CD4-positive, alpha-beta T cell (primary cell): ENCODE measurements at regions of chr1 and their contacts with region 1.

Region 1: DNA sequence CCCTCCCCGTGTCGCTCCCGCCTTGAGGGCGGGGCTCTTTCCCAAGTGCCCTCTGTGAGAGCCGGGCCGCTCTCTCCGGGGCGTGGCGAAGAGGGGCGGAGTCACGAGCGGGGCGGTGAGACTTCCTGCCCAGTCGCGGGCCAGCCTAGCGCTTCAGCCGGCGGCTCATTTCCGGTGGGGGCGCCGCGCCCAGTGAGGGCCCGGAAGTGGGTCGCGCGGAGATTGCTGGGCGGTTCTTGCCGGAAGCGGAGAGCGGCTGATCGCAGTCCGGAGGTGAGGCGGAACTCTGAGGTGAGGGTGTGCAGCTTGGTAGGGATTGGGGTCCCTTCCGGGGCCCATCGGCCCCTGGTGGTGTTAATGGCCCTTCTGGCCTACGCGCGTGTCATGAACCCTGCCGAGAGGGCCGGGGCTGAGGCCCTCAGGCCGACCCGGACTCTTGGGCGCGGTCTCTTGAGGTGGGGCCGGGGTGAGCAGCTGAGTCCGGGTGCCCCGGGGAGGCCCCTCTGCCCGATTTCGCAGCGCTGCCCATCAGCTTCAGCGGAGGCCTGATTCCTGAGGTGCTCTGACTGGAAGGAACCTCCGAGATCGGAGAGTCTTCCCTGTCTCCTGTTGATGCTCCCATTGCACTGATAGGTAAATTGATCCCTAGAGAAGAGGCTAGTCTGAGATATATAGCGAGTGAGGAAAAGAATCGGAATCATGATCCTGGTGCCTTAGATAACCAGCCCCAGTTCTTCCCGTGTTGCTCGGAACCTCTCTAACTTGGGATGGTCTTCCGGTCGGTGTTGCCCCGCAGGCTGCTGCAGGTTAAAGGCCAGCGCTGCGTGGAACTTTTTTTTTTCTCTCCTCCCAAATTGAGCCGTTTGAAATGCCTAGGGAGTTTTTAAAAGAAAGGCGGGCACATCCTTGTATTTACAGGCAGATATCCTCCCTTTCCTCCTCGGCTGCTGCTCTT is at the start of gene CAP1:
- DNase-seq: peak; percentile 99 to 100 (median 100)
- ATAC-seq: peak; percentile 88
- H3K4me3 ChIP-seq: peak within 1 kb of the TSS; percentile 100
- H3K4me3 Mint-ChIP-seq: peak within 1 kb of the TSS; percentile 98
- H3K27ac ChIP-seq: peak within 1 kb of the TSS; percentile 88 to 93
- H3K27ac Mint-ChIP-seq: peak within 1 kb of the TSS; percentile 95
- H3K4me1 ChIP-seq: peaks cover 77% of the 10 kb centered on the region
- H3K4me1 Mint-ChIP-seq: peaks cover 83% of the 10 kb centered on the region
- H3K27me3 ChIP-seq: no peaks in the 10 kb centered on the region
- H3K27me3 Mint-ChIP-seq: no peaks in the 10 kb centered on the region
- CTCF ChIP-seq: no peak
- total RNA-seq, gene CAP1: 121 to 126 TPM

Region 2: DNA sequence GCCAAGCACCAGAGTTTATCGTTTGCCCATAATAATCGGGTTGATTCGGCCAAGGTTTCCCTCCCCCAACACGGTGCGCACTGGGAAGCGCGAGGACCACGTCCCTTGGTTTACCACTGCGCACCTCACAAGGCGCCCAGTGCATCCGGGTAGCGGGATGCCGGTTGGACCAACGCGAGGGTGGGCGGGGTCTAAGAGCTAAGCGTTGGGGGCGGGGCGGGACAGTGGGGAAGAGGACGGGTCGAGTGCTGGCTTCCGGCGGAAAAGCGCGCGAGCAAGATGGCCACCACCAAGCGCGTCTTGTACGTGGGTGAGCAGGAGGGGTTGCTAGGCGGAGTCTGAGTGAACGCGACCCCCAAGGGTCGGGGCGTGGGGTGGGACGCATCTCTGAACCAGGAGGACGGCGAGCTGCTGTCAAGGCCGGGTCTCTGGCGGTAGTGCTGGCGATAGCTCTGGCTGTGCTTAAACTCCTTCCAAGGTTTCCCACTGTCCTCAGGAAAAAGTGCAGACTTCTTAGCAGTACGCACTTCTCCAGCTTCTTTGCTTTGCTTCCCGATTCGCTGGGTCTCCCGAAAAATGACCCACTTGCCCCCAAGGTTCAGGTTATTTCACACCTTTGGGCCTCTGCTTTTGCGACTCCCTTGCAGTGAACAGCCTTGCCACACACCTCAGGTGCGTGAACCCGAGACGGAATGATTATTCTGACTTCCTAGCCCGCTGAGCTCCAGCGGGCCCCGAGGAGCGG is 302.0 kb before region 1 on chr1 and contains the start of gene PPIE:
- CTCF ChIA-PET with region 1: no interaction called
- POLR2A ChIA-PET with region 1: interaction called, 3 read pairs
- intact Hi-C with region 1: loop called in 1 of 2 experiments (anchors 5 kb)
- DNase-seq: peak; percentile 89 to 97 (median 95)
- ATAC-seq: peak; percentile 98
- H3K4me3 ChIP-seq: peak within 1 kb of the TSS; percentile 96
- H3K4me3 Mint-ChIP-seq: peak within 1 kb of the TSS; percentile 96
- H3K27ac ChIP-seq: peak within 1 kb of the TSS; percentile 71 to 81
- H3K27ac Mint-ChIP-seq: peak within 1 kb of the TSS; percentile 87
- H3K4me1 ChIP-seq: peaks cover 21% of the 10 kb centered on the region
- H3K4me1 Mint-ChIP-seq: peaks cover 34% of the 10 kb centered on the region
- H3K27me3 ChIP-seq: peaks cover 8 to 19% of the 10 kb centered on the region in 2 experiments
- H3K27me3 Mint-ChIP-seq: peaks cover 28% of the 10 kb centered on the region
- CTCF ChIP-seq: no peak
- total RNA-seq, gene PPIE: 45.0 to 46.7 TPM

Region 3: GRCh38 chr1:39907528-39908453 is 133.0 kb before region 1 on chr1:
- CTCF ChIA-PET with region 1: no interaction called
- POLR2A ChIA-PET with region 1: no interaction called
- intact Hi-C with region 1: no loop called
- DNase-seq: peak in 2 of 14 experiments; percentile 54 to 62
- ATAC-seq: no peak
- H3K4me3 ChIP-seq: no peak overlapping the region
- H3K4me3 Mint-ChIP-seq: no peak overlapping the region
- H3K27ac ChIP-seq: no peak overlapping the region
- H3K27ac Mint-ChIP-seq: no peak overlapping the region
- H3K4me1 ChIP-seq: no peaks in the 10 kb centered on the region
- H3K4me1 Mint-ChIP-seq: no peaks in the 10 kb centered on the region
- H3K27me3 ChIP-seq: peaks cover 16 to 20% of the 10 kb centered on the region in 2 experiments
- H3K27me3 Mint-ChIP-seq: peaks cover 71% of the 10 kb centered on the region
- CTCF ChIP-seq: no peak

Region 4: DNA sequence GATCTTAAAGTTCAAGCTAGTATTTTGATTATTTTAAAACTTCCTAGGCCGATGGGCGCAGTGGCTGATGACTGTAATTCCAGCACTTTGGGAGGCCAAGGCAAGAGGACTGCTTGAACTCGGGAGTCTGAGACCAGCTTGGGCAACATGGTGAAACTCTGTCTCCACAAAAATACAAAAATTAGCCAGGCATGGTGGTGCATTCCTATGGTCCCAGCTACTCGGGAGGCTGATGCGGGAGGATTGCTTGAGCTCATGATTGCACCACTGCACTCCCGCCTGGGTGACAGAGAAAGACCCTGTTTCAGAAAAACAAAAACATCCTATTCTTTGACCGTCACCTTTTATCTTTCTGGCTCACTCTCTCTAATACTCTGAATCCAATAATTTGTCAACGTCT is 55.8 kb before region 1 on chr1:
- CTCF ChIA-PET with region 1: no interaction called
- POLR2A ChIA-PET with region 1: no interaction called
- intact Hi-C with region 1: no loop called
- DNase-seq: no peak
- ATAC-seq: no peak
- H3K4me3 ChIP-seq: no peak overlapping the region
- H3K4me3 Mint-ChIP-seq: no peak overlapping the region
- H3K27ac ChIP-seq: no peak overlapping the region
- H3K27ac Mint-ChIP-seq: no peak overlapping the region
- H3K4me1 ChIP-seq: no peaks in the 10 kb centered on the region
- H3K4me1 Mint-ChIP-seq: no peaks in the 10 kb centered on the region
- H3K27me3 ChIP-seq: no peaks in the 10 kb centered on the region
- H3K27me3 Mint-ChIP-seq: no peaks in the 10 kb centered on the region
- CTCF ChIP-seq: no peak

Region 5: GRCh38 chr1:40059338-40059959 is 18.7 kb after region 1 on chr1:
- CTCF ChIA-PET with region 1: interaction called, 4 read pairs
- POLR2A ChIA-PET with region 1: interaction called, 56 read pairs
- intact Hi-C with region 1: loop called (anchors 2 kb)
- DNase-seq: peak in 3 of 14 experiments; percentile 47 to 80 (median 64)
- ATAC-seq: peak; percentile 83
- H3K4me3 ChIP-seq: peak overlapping the region; percentile 30
- H3K4me3 Mint-ChIP-seq: peak overlapping the region; percentile 88
- H3K27ac ChIP-seq: peak overlapping the region; percentile 59 to 62
- H3K27ac Mint-ChIP-seq: peak overlapping the region; percentile 95
- H3K4me1 ChIP-seq: peaks cover 74% of the 10 kb centered on the region
- H3K4me1 Mint-ChIP-seq: peaks cover 96% of the 10 kb centered on the region
- H3K27me3 ChIP-seq: no peaks in the 10 kb centered on the region
- H3K27me3 Mint-ChIP-seq: no peaks in the 10 kb centered on the region
- CTCF ChIP-seq: peak; percentile 2